GM23248 (cell line): ENCODE measurements at regions of chr16 and their contacts with region 1.

Region 1: DNA sequence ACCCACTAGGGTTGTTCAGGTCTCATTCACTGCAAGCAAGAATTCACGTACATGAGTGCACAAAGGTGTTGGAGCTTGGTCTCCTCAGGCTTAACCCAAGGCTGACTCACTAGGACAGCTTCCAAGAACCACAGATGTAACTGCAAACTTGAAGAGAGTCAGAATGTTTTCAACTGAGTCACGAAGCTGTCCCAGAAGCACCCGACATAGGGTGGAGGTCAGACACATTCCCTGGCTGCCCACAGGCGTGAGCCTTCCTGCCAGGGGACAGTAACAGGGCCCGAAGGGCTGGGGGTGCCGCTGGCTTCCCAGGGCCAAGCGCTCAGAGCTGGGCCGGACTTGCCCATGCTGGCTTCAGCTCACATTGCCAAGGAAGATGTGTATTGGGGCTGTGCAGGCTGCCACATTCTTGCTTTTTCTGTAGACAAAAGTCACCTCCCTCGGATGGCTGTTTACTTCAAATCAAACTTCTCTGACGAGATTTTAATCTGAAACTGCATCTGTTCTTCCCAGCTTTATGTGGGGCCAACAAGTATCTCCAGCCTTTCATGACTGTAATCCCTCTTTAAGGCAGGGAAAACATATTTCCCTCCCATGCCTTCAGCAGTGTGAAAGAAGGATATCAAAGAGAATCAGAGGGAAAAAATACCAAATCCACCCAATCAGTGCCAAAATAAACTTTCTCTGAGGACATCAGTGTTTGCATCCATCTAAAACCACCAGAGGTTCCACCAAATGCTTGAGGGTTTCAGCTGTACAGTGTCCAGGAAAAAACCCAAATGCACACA is 14.3 kb downstream of the CMTM3 start:
- DNase-seq: peak; percentile 98
- H3K4me3 ChIP-seq: peak overlapping the region; percentile 43
- H3K27ac ChIP-seq: peak overlapping the region; percentile 97
- H3K4me1 ChIP-seq: peaks cover 51% of the 10 kb centered on the region
- H3K27me3 ChIP-seq: no peaks in the 10 kb centered on the region

Region 2: DNA sequence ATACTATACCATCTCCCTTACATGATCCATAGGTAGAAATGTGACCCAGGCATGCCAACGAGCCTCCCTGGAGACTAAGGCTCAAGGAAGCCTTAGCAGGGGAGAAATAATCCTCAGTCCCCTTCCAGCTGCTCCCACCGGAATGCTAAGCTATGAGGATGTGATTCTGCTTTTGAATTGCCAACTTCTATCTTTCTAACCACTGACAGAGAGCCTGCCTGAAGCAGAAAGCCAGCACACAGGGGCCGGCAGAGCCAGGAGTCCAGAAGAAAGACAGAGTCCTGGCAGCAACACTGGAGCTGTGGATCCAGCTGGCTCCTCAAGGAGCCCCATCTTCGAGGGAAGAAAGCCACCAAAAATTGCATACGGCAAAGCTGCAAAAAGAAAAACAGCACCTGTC is 831.9 kb before region 1 on chr16:
- in situ Hi-C with region 1: no loop called
- DNase-seq: no peak
- H3K4me3 ChIP-seq: no peak overlapping the region
- H3K27ac ChIP-seq: no peak overlapping the region
- H3K4me1 ChIP-seq: peaks cover 13% of the 10 kb centered on the region
- H3K27me3 ChIP-seq: no peaks in the 10 kb centered on the region

Region 3: GRCh38 chr16:66705790-66706505 is 87.2 kb after region 1 on chr16:
- in situ Hi-C with region 1: loop called (anchors 10 kb)
- DNase-seq: no peak
- H3K4me3 ChIP-seq: no peak overlapping the region
- H3K27ac ChIP-seq: no peak overlapping the region
- H3K4me1 ChIP-seq: 0 out of 2 replicates have a peak, but pooled peaks cover 5% of the 10 kb centered on the region
- H3K27me3 ChIP-seq: no peaks in the 10 kb centered on the region

Region 4: GRCh38 chr16:68005786-68006286 is 1387.1 kb after region 1 on chr16:
- in situ Hi-C with region 1: no loop called
- DNase-seq: no peak
- H3K4me3 ChIP-seq: no peak overlapping the region
- H3K27ac ChIP-seq: no peak overlapping the region
- H3K4me1 ChIP-seq: no peaks in the 10 kb centered on the region
- H3K27me3 ChIP-seq: no peaks in the 10 kb centered on the region